ENCODE measurements at regions of chr1 and their contacts with region 1.

Region 1: DNA sequence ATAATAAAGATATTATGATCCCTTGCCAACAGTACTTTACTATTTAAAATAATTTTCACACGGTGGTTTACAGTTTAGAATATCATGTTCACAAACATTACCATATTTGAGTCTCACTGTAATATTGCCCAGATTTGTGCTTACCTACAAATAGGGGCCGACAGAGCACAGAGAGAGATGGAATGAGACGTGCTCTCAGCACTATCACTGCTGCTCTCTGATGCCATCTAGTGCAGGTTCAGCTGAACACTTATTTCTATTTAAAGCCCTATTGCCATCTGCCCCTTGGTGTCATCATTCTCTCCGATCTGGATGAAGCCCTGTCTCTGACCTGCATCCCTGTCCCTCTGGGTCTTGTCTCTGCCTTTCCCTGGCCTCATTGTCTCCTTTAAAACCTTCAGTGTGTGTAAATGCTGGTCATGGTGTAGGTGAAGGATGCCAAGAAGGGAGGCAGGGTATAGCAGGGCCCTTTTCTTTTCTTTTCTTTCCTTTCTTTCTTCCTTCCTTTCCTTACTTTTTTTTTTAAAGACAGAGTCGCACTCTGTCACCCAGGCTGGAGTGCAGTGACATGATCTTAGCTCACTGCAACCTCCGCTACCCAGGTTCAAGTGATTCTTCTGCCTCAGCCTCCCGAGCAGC is 6.9 kb upstream of the GPATCH4 start:
- DNase-seq: peak; percentile 90
- H3K4me3 Mint-ChIP-seq: no peak overlapping the region
- H3K27ac Mint-ChIP-seq: no peak overlapping the region
- H3K4me1 Mint-ChIP-seq: peaks cover 6% of the 10 kb centered on the region
- H3K27me3 Mint-ChIP-seq: peaks cover 18% of the 10 kb centered on the region

Region 2: DNA sequence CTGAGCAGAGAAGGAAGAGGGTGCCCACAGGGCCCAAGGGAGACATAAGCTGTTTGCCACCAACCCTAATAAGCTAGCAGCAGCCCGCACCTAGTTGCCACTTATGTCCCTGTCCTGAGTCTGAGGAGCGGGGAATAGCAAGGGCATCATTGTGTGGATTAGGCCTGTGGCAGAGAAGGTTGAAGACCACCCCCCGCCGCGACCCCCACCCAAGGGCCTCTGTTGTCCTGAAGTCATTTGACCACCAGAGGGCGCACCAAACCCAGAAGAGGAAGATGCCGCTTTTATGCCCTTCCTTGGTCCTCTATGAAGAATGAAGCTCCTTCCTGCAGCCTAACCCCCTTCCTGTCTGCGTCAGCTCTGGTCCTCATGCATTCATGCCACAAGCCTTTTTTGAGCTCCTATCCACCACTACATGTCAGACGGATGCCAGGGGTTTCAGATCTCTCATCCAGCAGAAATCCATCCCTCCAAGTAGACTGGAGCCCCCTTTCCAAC is 222.6 kb before region 1 on chr1:
- intact Hi-C with region 1: loop called (anchors 1 kb)
- DNase-seq: peak; percentile 92
- H3K4me3 Mint-ChIP-seq: no peak overlapping the region
- H3K27ac Mint-ChIP-seq: no peak overlapping the region
- H3K4me1 Mint-ChIP-seq: peaks cover 4% of the 10 kb centered on the region
- H3K27me3 Mint-ChIP-seq: peaks cover 40% of the 10 kb centered on the region

Region 3: DNA sequence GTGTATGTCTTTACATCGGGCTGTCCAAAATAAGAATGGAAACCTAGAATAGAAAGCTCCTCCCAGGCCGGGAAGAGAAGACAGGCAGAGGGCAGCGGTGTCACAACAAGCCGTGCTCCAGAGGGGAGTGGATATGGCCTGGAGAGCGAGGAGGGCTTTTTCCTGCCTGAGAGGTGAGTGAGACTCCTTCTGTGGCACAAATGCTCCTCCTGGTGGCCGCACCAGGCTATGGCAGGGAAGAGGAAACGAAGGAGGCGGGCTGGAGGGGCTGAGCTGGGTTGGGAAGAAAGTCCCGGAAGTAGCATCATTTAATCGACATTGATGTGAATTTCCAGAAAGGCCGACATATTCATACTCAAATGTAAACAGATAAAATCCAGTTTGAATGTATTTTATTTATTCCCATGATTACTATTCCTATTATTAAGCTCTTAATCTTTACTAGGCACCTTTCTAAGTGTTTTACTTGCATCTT is 162.3 kb before region 1 on chr1:
- intact Hi-C with region 1: loop called (anchors 2 kb)
- DNase-seq: peak; percentile 94
- H3K4me3 Mint-ChIP-seq: no peak overlapping the region
- H3K27ac Mint-ChIP-seq: no peak overlapping the region
- H3K4me1 Mint-ChIP-seq: peaks cover 19% of the 10 kb centered on the region
- H3K27me3 Mint-ChIP-seq: peaks cover 64% of the 10 kb centered on the region

Region 4: GRCh38 chr1:156456622-156457465 is 151.3 kb before region 1 on chr1:
- intact Hi-C with region 1: loop called (anchors 1 kb)
- DNase-seq: peak; percentile 98
- H3K4me3 Mint-ChIP-seq: peak overlapping the region; percentile 92
- H3K27ac Mint-ChIP-seq: peak overlapping the region; percentile 98
- H3K4me1 Mint-ChIP-seq: peaks cover 16% of the 10 kb centered on the region
- H3K27me3 Mint-ChIP-seq: peaks cover 14% of the 10 kb centered on the region

Region 5: GRCh38 chr1:156480411-156481192 is 127.6 kb before region 1 on chr1:
- intact Hi-C with region 1: loop called (anchors 1 kb)
- DNase-seq: peak; percentile 92
- H3K4me3 Mint-ChIP-seq: peak overlapping the region; percentile 7
- H3K27ac Mint-ChIP-seq: peak overlapping the region; percentile 30
- H3K4me1 Mint-ChIP-seq: peaks cover 49% of the 10 kb centered on the region
- H3K27me3 Mint-ChIP-seq: no peaks in the 10 kb centered on the region

Region 6: DNA sequence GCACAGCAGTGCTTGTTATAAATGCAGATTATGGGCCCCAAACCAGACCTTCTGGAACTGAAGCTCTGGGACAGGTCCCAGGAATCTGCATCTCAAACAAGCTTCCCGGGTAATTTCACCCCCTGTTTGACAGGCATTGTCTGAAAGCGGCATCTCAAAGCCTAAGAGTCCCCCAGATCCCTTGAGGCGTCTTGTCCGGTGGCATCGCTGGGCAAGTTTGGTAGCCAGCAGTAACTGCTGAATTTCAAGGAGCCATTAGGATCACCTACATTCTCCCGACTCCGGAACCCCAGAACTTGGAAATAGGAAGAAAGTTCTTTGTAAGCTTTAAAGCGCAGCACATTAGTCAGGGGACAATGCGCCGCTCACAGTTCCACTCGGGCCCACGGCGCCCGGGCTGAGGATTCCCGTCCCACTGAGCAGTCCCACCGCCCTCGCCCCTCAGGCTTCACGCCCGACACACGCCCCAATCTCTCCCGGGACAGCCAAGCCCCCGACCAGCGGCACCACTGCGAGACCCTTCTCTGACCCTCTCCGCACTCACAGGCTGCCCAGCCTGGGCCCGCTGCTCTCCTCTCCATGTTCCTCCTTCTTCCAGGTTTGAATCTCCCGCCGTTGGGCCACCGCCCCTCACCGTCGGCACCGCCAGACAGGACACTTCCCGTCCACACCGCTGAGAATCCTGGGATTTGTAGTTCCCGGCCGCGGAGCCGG is 36.0 kb before region 1 on chr1 and contains the start of gene IQGAP3:
- intact Hi-C with region 1: loop called (anchors 5 kb)
- DNase-seq: peak; percentile 94
- H3K4me3 Mint-ChIP-seq: peak within 1 kb of the TSS; percentile 92
- H3K27ac Mint-ChIP-seq: peak within 1 kb of the TSS; percentile 77
- H3K4me1 Mint-ChIP-seq: peaks cover 22% of the 10 kb centered on the region
- H3K27me3 Mint-ChIP-seq: peaks cover 22% of the 10 kb centered on the region
- total RNA-seq, gene IQGAP3: 10.5 and 11.2 TPM in 2 replicates

Region 7: DNA sequence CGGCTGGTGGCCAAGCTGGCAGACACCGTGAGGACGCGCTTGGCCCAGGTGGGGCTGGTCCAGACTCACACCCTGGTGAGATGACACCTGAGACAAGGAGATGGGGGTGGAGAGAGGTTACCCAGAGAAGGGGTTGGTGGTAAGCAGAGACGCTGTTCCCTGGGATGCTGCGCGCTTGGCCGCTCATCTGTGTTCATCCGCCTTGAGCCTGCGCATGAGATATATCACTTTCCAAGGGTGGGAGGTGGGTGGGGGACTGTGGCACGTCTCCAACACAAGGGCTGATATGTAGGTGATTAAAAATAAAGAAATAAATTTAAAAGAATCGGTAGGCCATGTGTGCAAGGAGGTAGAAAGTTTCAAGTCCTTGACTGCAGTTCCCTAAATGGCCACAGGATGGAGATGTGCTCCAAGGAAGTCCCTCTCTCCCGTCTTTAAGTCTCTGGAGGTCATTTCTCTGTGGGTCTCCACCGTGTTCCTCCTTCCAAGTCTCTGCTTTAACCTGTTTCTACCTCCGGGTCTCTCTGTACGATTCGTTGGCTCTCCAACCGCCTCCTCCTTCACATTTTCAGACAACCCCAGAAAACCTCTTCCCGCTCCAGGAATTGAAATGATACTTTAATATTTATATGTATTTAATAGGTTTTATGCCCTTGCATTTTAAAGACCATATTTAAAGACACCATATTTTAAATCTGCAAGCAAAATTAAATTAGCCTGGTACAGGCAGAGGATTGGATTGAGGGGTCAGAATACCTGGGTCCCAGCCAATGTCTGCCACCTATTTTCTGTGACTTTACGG is 24.1 kb before region 1 on chr1:
- intact Hi-C with region 1: loop called (anchors 1 kb)
- DNase-seq: peak; percentile 93
- H3K4me3 Mint-ChIP-seq: no peak overlapping the region
- H3K27ac Mint-ChIP-seq: peak overlapping the region; percentile 34
- H3K4me1 Mint-ChIP-seq: peaks cover 13% of the 10 kb centered on the region
- H3K27me3 Mint-ChIP-seq: no peaks in the 10 kb centered on the region

Region 8: DNA sequence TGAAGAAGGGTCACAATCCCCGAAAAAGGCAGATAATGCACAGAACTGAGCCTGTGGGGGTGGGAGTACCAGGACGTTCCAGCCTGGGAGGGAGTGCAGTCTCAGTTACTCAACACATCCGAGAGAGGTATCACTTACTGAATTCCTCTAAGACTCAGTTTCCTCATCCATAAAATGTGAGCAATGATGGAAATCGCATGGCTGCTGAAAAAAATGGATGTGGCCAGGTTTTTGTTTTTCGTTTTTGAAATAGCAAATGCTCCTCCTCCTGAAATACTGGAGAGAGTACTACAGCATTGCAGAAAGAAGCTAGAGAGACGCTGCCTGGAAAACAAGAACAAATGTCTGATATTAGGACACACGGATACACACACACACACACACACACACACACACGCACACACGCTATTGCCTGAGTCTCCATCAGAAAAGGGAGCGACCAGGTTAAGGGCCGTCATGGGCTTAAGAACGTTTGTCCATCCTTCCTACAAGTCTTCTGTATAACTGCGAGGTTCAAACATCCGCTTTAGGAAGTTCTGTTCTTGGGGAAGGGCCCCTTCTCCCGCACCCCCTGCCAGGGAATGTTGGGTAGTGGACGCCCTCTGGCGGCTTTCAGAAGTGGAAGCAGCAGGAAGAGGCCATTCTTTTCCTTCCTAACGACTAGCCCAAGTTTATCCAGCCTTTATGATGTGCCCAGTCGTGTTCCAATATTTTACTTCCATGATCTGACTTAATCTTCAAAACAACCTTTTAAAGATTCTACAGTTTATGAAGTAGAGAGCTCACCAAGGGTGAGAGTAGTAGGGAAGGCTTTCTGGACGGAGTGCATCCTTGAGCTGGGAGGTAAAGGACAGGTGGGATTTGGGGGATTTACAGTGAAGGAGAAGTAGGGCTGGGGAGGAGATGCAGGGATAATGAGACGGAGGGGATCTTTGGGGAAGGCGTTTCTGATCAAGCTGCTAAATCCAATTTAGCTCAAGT is 69.8 kb after region 1 on chr1:
- intact Hi-C with region 1: no loop called
- DNase-seq: peak; percentile 76
- H3K4me3 Mint-ChIP-seq: peak overlapping the region; percentile 31
- H3K27ac Mint-ChIP-seq: peak overlapping the region; percentile 6
- H3K4me1 Mint-ChIP-seq: peaks cover 13% of the 10 kb centered on the region
- H3K27me3 Mint-ChIP-seq: peaks cover 80% of the 10 kb centered on the region

Region 9: GRCh38 chr1:156980551-156980950 is 372.4 kb after region 1 on chr1:
- intact Hi-C with region 1: no loop called
- DNase-seq: no peak
- H3K4me3 Mint-ChIP-seq: no peak overlapping the region
- H3K27ac Mint-ChIP-seq: no peak overlapping the region
- H3K4me1 Mint-ChIP-seq: no peaks in the 10 kb centered on the region
- H3K27me3 Mint-ChIP-seq: peaks cover 47% of the 10 kb centered on the region

Region 10: GRCh38 chr1:157092806-157093205 is 484.7 kb after region 1 on chr1:
- intact Hi-C with region 1: no loop called
- DNase-seq: no peak
- H3K4me3 Mint-ChIP-seq: no peak overlapping the region
- H3K27ac Mint-ChIP-seq: no peak overlapping the region
- H3K4me1 Mint-ChIP-seq: peaks cover 2% of the 10 kb centered on the region
- H3K27me3 Mint-ChIP-seq: peaks cover 5% of the 10 kb centered on the region

Measured in activated CD4-positive, alpha-beta T cell treated with anti-CD3 and anti-CD28 coated beads, Interleukin-2, amount 10 ng/mL, durations not matched to agents 24 days and 14 days (primary cell).